Activated T-helper 1 cell treated with anti-CD3 and anti-CD28 coated beads, Interleukin-12 subunit alpha, Interleukin-12 subunit beta, Interleukin-2, Interleukin-4 antibody, amounts not matched to agents 30 ng/mL and 10 ng/mL and 1 ng/mL, durations not matched to agents 14 hours and 24 hours and 36 hours (primary cell): ENCODE measurements at regions of chr10 and their contacts with region 1.

Region 1: GRCh38 chr10:77837240-77837924 is 89.2 kb downstream of the DLG5 start:
- DNase-seq: peak; percentile 67
- H3K4me3 Mint-ChIP-seq: peak overlapping the region; percentile 19
- H3K27ac Mint-ChIP-seq: peak overlapping the region; percentile 52
- H3K4me1 Mint-ChIP-seq: peaks cover 29% of the 10 kb centered on the region
- H3K27me3 Mint-ChIP-seq: no peaks in the 10 kb centered on the region

Region 2: DNA sequence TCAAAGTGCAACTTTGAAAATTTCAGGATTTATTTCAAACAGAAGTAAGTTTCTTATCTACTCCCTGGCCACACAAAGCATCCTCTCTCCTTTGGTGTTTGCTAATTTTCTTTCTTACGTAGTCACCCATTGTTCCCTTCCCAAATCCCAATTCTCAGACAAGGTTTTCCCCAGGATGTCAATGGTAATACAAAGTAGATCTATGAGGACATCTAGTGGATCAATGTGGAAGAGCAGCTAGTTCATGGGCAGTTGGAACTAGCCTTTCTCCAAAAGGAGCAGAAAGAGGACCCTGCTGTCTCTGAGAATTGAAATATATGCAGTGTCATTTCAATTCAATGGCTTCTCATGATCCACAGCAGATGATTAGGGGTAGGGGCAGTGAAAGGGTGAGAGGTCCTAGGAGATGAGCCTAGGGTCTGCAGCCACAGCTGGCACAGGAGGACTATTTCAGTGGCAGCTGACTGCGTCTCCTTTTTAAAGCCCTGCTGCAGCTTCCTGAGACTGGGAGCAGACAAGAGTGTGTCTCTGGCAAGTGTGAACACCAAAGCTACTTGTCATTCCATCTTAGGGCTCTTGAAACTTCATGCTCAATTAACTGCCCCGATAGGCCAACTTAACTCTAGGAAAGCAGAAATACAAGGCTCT is 832.3 kb before region 1 on chr10:
- intact Hi-C with region 1: no loop called
- DNase-seq: no peak
- H3K4me3 Mint-ChIP-seq: no peak overlapping the region
- H3K27ac Mint-ChIP-seq: no peak overlapping the region
- H3K4me1 Mint-ChIP-seq: no peaks in the 10 kb centered on the region
- H3K27me3 Mint-ChIP-seq: peaks cover 3% of the 10 kb centered on the region

Region 3: DNA sequence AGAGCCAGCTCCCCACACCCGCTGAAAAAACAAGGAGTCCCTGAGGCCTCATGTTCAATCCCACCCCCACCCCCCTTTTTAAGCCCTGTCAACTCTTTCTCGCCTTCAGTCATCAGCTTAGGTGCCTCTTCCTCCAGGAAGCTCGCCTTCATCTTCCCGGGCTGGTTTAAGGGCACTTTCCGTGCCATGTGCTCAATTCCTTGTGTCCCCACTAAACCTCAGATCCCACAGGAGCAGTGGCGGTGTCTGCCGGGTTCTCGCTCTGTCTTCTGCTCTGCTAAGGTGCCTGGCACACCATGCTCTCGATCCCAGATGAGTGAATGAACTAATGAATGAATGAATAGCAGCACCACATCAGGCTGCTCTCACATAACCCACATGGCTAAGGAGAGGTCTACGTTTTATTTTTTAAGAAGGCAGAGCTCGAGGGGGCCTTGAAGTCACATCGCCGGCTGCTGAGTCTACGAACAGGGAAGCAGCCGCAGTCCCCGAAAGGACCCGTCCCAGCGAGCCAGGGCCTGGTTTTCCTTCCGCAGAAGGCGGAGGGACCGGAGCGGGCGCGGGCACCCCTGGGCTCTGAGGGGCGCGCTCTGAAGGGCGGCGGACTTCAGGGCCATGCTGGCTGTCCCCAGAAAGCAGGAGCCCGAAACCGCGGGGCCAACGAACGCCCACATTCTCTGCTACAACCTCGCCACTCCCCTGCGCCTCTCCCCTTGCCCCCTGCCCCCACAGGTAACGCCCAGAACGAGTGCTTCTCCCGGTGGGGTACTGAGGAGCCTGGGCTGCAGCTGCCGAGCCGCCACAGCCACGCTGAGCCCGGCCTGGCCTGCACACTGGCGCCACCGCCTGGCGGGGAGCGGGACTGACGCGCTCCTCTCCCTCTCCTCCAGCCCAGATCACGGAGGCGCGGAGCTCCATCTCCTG is 126.4 kb before region 1 on chr10:
- intact Hi-C with region 1: loop called (anchors 1 kb)
- DNase-seq: peak; percentile 59
- H3K4me3 Mint-ChIP-seq: peak overlapping the region; percentile 30
- H3K27ac Mint-ChIP-seq: no peak overlapping the region
- H3K4me1 Mint-ChIP-seq: peaks cover 5% of the 10 kb centered on the region
- H3K27me3 Mint-ChIP-seq: peaks cover 32% of the 10 kb centered on the region

Region 4: DNA sequence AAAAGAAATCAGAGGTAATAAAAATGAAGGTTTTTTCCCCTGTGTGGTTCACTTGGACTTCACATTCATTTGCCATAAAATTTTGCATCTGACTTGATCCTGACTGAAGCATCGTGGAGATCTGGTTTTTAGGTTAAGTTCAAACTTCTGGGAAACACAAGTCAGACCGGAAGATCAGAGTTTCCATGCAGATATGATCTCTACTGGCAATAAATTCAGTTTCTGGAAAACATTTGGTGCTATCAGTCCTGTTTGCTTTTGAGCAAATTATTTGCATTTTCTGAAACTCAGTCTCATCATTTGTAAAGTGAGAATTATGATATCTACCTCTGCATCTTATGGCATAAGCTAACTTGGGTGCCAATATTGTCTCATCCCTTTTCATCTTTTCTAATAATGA is 118.4 kb before region 1 on chr10:
- intact Hi-C with region 1: loop called (anchors 1 kb)
- DNase-seq: no peak
- H3K4me3 Mint-ChIP-seq: no peak overlapping the region
- H3K27ac Mint-ChIP-seq: no peak overlapping the region
- H3K4me1 Mint-ChIP-seq: peaks cover 7% of the 10 kb centered on the region
- H3K27me3 Mint-ChIP-seq: peaks cover 4% of the 10 kb centered on the region

Region 5: GRCh38 chr10:77801474-77802161 is 35.8 kb before region 1 on chr10:
- intact Hi-C with region 1: loop called (anchors 1 kb)
- DNase-seq: peak; percentile 54
- H3K4me3 Mint-ChIP-seq: peak overlapping the region; percentile 41
- H3K27ac Mint-ChIP-seq: peak overlapping the region; percentile 82
- H3K4me1 Mint-ChIP-seq: peaks cover 38% of the 10 kb centered on the region
- H3K27me3 Mint-ChIP-seq: peaks cover 6% of the 10 kb centered on the region

Region 6: GRCh38 chr10:77820349-77820748 is 17.0 kb before region 1 on chr10:
- intact Hi-C with region 1: loop called (anchors 1 kb)
- DNase-seq: no peak
- H3K4me3 Mint-ChIP-seq: no peak overlapping the region
- H3K27ac Mint-ChIP-seq: peak overlapping the region; percentile 55
- H3K4me1 Mint-ChIP-seq: peaks cover 16% of the 10 kb centered on the region
- H3K27me3 Mint-ChIP-seq: no peaks in the 10 kb centered on the region

Region 7: GRCh38 chr10:77865629-77866360 is 28.4 kb after region 1 on chr10:
- intact Hi-C with region 1: no loop called
- DNase-seq: no peak
- H3K4me3 Mint-ChIP-seq: no peak overlapping the region
- H3K27ac Mint-ChIP-seq: no peak overlapping the region
- H3K4me1 Mint-ChIP-seq: no peaks in the 10 kb centered on the region
- H3K27me3 Mint-ChIP-seq: peaks cover 6% of the 10 kb centered on the region

Region 8: GRCh38 chr10:78029269-78030226 is 192.2 kb after region 1 on chr10 and contains the start of gene POLR3A:
- intact Hi-C with region 1: loop called (anchors 2 kb)
- DNase-seq: peak; percentile 89
- H3K4me3 Mint-ChIP-seq: peak within 1 kb of the TSS; percentile 99
- H3K27ac Mint-ChIP-seq: peak within 1 kb of the TSS; percentile 91
- H3K4me1 Mint-ChIP-seq: peaks cover 28% of the 10 kb centered on the region
- H3K27me3 Mint-ChIP-seq: no peaks in the 10 kb centered on the region
- total RNA-seq, gene POLR3A: 29.5 and 30.8 TPM in 2 replicates